ENCODE measurements at regions of chr5 and their contacts with region 1.

Region 1: DNA sequence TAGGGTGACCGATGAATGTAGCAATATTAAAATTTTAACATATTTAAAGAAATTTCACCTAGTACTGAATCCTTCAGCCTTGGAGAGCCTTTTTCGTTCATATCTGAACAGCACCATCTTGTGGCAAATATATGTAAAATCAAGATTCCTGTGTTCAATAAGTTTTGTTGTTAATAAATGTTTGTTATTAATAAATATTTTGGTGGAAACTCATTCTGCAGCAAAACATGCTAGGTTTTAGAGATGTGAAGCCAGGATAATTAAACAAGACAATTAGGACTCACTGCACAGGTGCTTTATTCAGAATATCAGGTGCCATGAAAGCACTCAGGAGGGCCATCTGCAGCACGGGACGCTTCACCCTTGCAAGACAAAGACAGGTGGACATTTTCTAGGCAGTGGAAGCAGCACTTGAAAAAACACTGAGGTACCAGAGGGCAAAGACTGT is 15.7 kb downstream of the TICAM2 start:
- DNase-seq: no peak
- H3K4me3 ChIP-seq: no peak overlapping the region
- H3K27ac ChIP-seq: no peak overlapping the region
- H3K4me1 ChIP-seq: no peaks in the 10 kb centered on the region
- H3K27me3 ChIP-seq: no peaks in the 10 kb centered on the region
- CTCF ChIP-seq: peak in 5 of 6 experiments; percentile 38 to 63 (median 50)
- POLR2A ChIP-seq: no peak

Region 2: DNA sequence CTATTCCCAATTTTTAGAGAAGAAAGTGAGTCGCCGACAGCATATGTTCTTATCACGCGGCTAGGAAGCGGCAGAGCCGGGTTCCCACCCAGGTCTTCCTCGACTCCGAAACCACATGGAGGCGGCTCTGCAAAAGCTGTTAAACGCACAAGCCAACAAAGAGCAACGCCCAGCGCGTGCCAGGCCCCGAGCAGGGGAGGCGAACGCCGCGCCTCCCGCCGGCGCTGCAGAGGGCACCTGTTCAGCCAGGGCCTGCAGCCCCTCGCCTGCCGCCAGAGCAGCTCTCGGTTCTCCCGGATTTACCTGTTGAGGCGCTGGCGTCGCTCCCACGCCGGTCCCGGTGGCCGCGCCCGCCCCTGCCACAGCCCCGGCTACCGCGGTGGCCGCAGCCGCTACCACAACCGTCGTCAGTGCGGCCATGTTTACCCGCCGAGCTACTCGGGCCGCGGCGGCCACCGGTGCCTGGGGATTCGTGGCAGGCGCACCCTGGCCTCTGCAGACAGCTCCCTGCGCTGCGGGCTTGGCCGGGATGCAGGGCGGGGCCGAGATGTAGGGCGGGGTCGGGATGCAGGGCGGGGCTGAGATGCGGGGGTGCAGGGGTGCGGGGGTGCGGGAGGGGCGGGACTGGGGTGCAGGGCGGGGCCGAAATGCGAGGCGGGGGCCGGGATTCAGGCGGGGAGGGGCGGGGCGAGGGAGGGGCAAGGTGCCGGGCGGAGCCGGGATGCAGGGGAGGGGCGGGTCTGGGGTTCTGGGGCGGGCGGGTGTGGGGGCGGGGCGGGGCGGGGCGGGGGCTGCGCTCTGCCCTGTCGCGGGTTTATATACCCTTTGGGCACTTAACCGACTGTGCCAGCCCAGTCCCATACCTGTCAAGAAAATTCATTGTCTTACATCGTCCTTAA is 290.3 kb before region 1 on chr5 and contains the start of gene CCDC112:
- intact Hi-C with region 1: no loop called
- DNase-seq: peak; percentile 78
- H3K4me3 ChIP-seq: peak within 1 kb of the TSS; percentile 51 to 97 (median 58)
- H3K27ac ChIP-seq: peak within 1 kb of the TSS in 1 of 3 donors; percentile 51
- H3K4me1 ChIP-seq: peaks cover 4 to 6% of the 10 kb centered on the region in 2 donors
- H3K27me3 ChIP-seq: no peaks in the 10 kb centered on the region
- CTCF ChIP-seq: no peak
- POLR2A ChIP-seq: peak in 1 of 2 donors; percentile 76
- total RNA-seq, gene CCDC112: 3.3 to 4.9 (median 3.8) TPM

Region 3: DNA sequence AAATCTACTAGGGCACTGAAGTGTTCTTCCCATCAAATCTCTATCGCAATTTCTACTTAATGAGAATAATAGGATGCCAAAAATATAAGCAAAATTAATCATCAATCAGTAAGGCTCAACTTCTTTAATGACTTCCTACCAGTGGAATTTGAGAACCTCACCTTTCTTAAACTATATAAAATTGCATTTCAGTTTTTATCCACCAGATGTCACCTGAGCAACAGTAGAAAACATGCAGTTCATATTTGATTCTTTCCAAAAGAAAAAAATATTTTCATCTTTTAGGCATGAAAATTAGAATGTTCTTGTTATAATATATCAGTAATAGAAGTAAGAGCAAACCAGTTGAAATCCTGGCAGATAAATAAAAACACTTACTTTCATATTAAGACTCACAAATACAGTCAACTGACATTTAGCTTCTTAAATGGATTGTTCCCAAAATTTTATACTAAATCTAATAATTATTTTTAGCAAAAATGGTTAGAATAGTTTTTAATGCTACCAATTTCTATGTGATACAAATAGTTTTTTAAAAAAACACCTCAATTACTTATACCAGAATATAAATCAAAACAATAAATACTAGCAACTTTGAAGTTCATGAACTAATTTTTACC is 276.8 kb before region 1 on chr5:
- intact Hi-C with region 1: loop called (anchors 5 kb)
- DNase-seq: no peak
- H3K4me3 ChIP-seq: no peak overlapping the region
- H3K27ac ChIP-seq: no peak overlapping the region
- H3K4me1 ChIP-seq: no peaks in the 10 kb centered on the region
- H3K27me3 ChIP-seq: no peaks in the 10 kb centered on the region
- CTCF ChIP-seq: peak in 4 of 6 experiments; percentile 33 to 80 (median 70)
- POLR2A ChIP-seq: no peak

Measured in thyroid gland (tissue), 4 donors.